Activated T-helper 1 cell treated with anti-CD3 and anti-CD28 coated beads, Interleukin-12 subunit alpha, Interleukin-12 subunit beta, Interleukin-2, Interleukin-4 antibody, amounts not matched to agents 30 ng/mL and 10 ng/mL and 1 ng/mL, durations not matched to agents 14 hours and 24 hours and 36 hours (primary cell): ENCODE measurements at regions of chr3 and their contacts with region 1.

Region 1: GRCh38 chr3:39288300-39288808 is 8.5 kb upstream of the CX3CR1 start:
- DNase-seq: peak; percentile 80
- H3K4me3 Mint-ChIP-seq: no peak overlapping the region
- H3K27ac Mint-ChIP-seq: peak overlapping the region; percentile 25
- H3K4me1 Mint-ChIP-seq: peaks cover 68% of the 10 kb centered on the region
- H3K27me3 Mint-ChIP-seq: peaks cover 3% of the 10 kb centered on the region

Region 2: GRCh38 chr3:39101022-39101689 is 187.2 kb before region 1 on chr3:
- intact Hi-C with region 1: loop called (anchors 1 kb)
- DNase-seq: peak; percentile 27
- H3K4me3 Mint-ChIP-seq: no peak overlapping the region
- H3K27ac Mint-ChIP-seq: no peak overlapping the region
- H3K4me1 Mint-ChIP-seq: peaks cover 42% of the 10 kb centered on the region
- H3K27me3 Mint-ChIP-seq: peaks cover 2% of the 10 kb centered on the region

Region 3: DNA sequence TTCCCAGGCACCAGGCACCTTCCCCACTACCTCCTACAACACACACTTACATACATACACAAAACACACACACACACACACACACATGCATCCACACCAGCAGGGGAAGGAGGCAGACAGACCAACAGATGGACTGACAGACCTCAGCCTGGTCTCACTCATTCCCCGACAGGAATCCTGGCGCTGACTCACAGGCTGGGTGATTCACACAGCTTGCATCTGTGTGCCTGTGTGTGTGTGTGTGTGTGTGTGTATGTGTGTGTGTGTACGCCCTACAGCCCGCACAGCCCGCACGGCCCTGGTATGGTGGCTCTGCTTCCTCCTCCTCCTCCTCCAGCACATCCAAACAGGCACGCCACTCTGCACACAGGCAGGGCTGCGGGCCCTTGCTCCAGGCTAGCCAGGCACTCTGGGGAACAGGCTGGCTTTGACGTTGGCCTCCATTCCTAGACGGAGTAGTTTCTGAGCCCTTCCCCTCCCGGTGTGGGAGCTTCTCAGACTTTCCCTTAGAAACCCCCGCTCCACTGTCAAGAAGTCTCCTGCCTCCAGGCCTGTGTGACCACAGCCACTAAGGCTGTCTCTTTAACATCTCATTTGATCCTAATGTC is 141.3 kb before region 1 on chr3:
- intact Hi-C with region 1: loop called (anchors 1 kb)
- DNase-seq: peak; percentile 64
- H3K4me3 Mint-ChIP-seq: peak overlapping the region; percentile 94
- H3K27ac Mint-ChIP-seq: peak overlapping the region; percentile 97
- H3K4me1 Mint-ChIP-seq: peaks cover 69% of the 10 kb centered on the region
- H3K27me3 Mint-ChIP-seq: no peaks in the 10 kb centered on the region

Region 4: GRCh38 chr3:39208463-39209055 is 79.8 kb before region 1 on chr3:
- intact Hi-C with region 1: loop called (anchors 1 kb)
- DNase-seq: no peak
- H3K4me3 Mint-ChIP-seq: no peak overlapping the region
- H3K27ac Mint-ChIP-seq: no peak overlapping the region
- H3K4me1 Mint-ChIP-seq: peaks cover 14% of the 10 kb centered on the region
- H3K27me3 Mint-ChIP-seq: peaks cover 26% of the 10 kb centered on the region

Region 5: DNA sequence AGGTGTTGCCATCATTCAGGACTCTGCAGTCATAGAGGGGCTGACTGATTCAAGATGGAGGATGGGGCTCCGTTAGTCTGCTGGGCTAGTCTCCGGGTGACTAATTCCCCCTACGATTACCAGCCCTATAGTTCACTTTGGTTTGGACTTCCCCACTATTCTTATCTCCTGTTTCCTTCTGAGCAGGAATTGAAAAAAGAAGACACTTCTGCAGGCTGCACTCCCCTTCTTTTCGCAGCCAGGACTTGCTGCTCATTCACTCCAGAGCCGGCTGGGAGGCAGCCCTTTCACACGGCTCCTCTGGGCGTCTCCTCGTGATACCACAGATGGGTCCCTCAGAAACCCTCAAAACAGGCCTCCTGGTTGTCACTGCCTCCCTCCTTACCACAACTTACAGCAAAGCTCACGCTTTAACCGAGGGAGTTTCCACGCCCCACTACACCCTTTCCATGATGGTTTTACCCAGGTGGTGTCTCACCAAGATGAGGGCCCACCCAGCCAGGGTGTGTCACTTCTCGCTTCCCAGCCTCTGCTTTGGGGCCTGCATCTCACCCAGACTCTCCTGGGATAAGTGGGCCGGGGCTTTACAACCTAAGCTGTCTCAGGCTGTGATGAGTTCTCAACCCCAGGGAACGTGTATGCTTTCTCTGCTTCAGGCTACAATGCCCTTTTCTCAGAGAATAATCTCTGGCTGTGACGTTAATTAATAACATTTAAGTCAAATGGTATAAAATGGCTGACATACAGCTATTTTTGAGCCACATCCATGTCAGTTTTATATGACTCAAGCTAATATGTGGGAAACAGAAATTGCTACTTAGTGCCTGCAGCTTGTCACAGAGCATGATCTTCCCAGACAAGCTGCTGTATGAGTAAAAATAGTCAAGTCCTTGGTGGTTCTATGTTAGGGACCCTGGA is 20.5 kb before region 1 on chr3:
- intact Hi-C with region 1: loop called (anchors 1 kb)
- DNase-seq: peak; percentile 83
- H3K4me3 Mint-ChIP-seq: peak overlapping the region; percentile 69
- H3K27ac Mint-ChIP-seq: peak overlapping the region; percentile 95
- H3K4me1 Mint-ChIP-seq: peaks cover 85% of the 10 kb centered on the region
- H3K27me3 Mint-ChIP-seq: no peaks in the 10 kb centered on the region

Region 6: GRCh38 chr3:39338201-39338600 is 49.8 kb after region 1 on chr3:
- intact Hi-C with region 1: no loop called
- DNase-seq: no peak
- H3K4me3 Mint-ChIP-seq: no peak overlapping the region
- H3K27ac Mint-ChIP-seq: no peak overlapping the region
- H3K4me1 Mint-ChIP-seq: peaks cover 9% of the 10 kb centered on the region
- H3K27me3 Mint-ChIP-seq: peaks cover 6% of the 10 kb centered on the region

Region 7: GRCh38 chr3:39378088-39378487 is 89.7 kb after region 1 on chr3:
- intact Hi-C with region 1: loop called (anchors 1 kb)
- DNase-seq: peak; percentile 56
- H3K4me3 Mint-ChIP-seq: no peak overlapping the region
- H3K27ac Mint-ChIP-seq: no peak overlapping the region
- H3K4me1 Mint-ChIP-seq: peaks cover 21% of the 10 kb centered on the region
- H3K27me3 Mint-ChIP-seq: no peaks in the 10 kb centered on the region